Activated T-helper 2 cell treated with anti-CD3 and anti-CD28 coated beads, Interferon-gamma antibody, Interleukin-2, Interleukin-4, amounts not matched to agents 10 μg/mL and 5 μg/mL and 100 μg/mL, durations not matched to agents 14 hours and 24 hours and 36 hours (primary cell): ENCODE measurements at regions of chr16 and their contacts with region 1.

Region 1: DNA sequence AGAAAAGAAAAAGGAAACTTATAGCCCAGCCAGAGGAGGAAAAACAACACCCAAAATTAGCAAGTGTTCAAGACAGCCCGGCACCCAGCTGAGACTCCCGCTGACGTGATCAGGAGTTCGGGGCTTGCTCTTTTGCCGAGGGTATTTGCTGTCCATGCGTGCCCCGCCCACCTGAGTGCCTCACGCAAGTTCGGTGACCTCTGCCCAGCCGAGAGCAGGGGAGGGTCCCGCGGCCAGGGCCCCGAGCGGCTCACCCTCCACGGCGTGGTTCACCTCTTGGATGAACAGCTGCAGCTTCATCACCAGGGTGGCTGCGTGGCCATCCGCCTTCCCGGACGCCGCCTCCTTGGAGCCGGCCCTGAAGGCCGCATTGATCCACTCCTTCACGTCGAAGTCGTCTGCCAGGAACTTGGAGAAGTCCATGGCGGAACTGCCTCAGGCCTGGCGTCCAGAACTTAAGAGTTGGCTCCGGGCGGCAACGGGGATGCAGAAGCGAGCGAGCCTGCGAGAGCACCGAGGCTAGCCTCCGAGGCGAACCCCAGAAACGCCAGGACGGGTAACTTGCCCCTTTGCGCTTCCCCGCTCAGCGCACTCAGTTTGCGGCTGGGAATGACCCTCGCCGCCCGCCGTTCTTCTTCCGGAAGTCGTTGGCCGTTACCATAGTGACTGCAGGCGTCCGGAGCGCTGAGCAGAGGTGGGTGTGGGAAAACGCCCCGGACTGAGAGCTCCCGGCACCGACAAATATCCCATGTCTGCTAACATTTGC is at the start of gene COG7:
- DNase-seq: peak; percentile 84
- H3K4me3 Mint-ChIP-seq: peak within 1 kb of the TSS; percentile 99
- H3K27ac Mint-ChIP-seq: peak within 1 kb of the TSS; percentile 92
- H3K4me1 Mint-ChIP-seq: peaks cover 13% of the 10 kb centered on the region
- H3K27me3 Mint-ChIP-seq: no peaks in the 10 kb centered on the region
- total RNA-seq, gene COG7: 23.8 and 24.2 TPM in 2 replicates

Region 2: GRCh38 chr16:23504451-23505179 is 51.9 kb after region 1 on chr16:
- intact Hi-C with region 1: loop called (anchors 10 kb)
- DNase-seq: peak; percentile 68
- H3K4me3 Mint-ChIP-seq: peak overlapping the region; percentile 15
- H3K27ac Mint-ChIP-seq: peak overlapping the region; percentile 77
- H3K4me1 Mint-ChIP-seq: peaks cover 64% of the 10 kb centered on the region
- H3K27me3 Mint-ChIP-seq: no peaks in the 10 kb centered on the region

Region 3: DNA sequence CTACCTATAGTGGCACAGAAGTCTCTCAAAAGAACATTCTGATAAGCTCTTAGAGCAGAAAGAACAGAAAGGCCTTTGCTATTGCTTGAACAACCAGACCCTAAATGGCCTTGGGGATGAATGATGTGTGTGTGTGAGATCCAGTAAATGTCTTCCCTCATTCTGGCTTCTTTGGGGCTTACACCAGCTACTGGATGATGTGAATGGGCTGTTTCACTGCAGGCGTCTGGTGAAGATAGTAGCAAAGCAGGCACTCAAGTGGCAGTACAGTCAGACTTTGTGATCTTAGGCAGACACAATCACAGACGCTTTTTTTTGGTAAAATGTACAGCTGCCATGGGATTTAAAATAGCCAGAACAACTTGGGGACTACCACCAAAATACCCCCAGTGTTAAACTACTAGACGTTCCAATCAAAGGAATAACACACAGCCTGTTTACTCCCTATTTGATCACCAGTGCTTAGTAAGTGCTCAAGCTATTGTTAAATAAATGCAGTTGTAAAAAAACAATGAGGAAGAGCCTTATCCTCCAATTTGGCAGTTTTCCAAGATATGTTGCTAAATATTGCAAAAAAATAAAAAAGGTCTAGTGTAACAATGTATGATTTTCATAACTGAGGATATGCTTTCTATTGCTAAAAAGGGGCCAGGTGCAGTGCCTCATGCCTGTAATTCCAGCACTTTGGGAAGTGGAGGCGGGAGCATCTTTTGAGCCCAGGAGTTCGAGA is 125.5 kb after region 1 on chr16:
- intact Hi-C with region 1: no loop called
- DNase-seq: no peak
- H3K4me3 Mint-ChIP-seq: no peak overlapping the region
- H3K27ac Mint-ChIP-seq: no peak overlapping the region
- H3K4me1 Mint-ChIP-seq: no peaks in the 10 kb centered on the region
- H3K27me3 Mint-ChIP-seq: no peaks in the 10 kb centered on the region